ENCODE measurements at regions of chr20 and their contacts with region 1.

Region 1: DNA sequence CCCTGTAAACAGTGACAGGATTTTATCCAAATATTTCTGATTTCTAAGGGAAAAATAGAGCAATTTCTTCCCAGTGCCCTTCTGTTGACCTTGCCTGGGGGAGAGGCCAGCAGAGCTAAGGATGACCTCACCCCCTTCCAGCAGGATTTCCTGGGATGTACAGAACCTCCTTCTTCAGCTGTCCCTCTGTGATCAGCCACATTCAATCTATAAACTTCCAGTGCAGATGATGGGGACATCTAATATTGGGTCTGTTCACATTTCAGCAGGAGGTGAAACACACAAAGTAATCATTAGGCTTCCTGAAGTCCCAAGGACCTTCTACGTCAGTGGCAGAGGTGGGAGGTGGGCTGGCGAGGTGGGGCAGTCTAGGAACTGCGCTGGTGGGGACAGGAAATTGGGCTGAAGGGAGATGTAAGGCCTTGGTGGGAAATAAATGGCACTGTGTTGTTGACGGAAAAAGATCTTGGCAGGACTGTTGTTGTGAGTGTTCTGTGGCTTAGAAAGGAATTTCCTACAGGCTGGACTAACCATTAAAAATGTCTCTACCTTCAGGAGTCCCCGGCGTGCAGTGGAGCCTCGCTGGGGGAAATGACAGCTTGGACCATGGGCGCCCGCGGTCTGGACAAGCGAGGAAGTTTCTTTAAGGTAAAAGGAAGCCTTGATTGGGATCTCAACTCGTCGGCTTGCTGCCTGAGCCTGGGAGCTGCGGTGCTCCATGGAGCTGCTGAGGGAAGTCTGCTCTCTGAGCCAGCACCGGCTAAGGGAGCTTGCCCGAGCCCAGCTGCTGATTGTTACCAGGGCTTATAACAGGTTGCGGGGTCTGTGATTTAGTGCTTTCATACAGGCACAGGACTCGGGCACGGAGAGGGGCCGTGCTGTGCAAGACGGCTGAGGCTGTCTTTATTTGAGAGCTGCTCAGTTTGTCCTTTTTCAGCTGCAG is 127.9 kb upstream of the NAA20 start:
- DNase-seq: peak; percentile 34
- H3K4me3 ChIP-seq: peak overlapping the region in 1 of 2 donors; percentile 14
- H3K27ac ChIP-seq: peak overlapping the region; percentile 79 to 82
- H3K4me1 ChIP-seq: peaks cover 27% of the 10 kb centered on the region
- H3K27me3 ChIP-seq: no peaks in the 10 kb centered on the region
- CTCF ChIP-seq: no peak
- POLR2A ChIP-seq: no peak

Region 2: GRCh38 chr20:19692685-19693119 is 196.6 kb before region 1 on chr20:
- intact Hi-C with region 1: loop called (anchors 10 kb)
- DNase-seq: peak; percentile 39
- H3K4me3 ChIP-seq: no peak overlapping the region
- H3K27ac ChIP-seq: no peak overlapping the region
- H3K4me1 ChIP-seq: no peaks in the 10 kb centered on the region
- H3K27me3 ChIP-seq: no peaks in the 10 kb centered on the region
- CTCF ChIP-seq: peak; percentile 87 to 96 (median 90)
- POLR2A ChIP-seq: no peak

Region 3: DNA sequence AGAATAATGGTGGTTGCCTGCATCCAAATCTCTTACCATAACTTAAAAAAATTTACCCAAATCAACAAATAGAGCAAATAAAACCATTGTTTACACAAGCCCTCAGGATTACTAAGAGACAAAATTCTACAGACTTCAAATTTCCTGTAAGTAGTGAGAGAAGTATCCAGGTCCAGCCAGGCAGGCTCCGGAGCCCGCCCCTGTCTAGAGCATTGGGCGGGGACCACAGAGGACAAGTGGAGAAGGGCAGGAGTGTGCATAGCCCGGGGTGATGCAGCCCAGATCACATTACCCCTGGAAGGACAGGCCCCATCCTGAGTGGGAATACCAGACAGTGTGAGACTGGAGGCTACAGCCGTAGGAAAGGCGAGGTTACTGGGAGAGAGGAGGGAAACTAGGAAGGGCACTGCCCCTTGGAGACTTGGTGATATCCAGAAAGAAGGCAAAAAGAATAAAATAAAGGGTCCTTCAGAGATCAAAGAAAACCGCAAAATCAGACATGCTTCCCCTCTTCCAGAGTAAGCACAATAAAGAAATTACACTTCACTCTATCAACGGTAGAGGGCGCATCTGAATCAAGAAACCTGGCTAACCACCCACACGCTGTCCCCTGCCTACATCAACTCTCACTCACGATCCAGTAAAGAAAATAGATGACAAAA is 104.6 kb before region 1 on chr20:
- intact Hi-C with region 1: loop called (anchors 2 kb)
- DNase-seq: peak; percentile 79
- H3K4me3 ChIP-seq: no peak overlapping the region
- H3K27ac ChIP-seq: peak overlapping the region; percentile 43 to 50
- H3K4me1 ChIP-seq: no peaks in the 10 kb centered on the region
- H3K27me3 ChIP-seq: no peaks in the 10 kb centered on the region
- CTCF ChIP-seq: peak; percentile 49 to 81 (median 78)
- POLR2A ChIP-seq: no peak

Region 4: GRCh38 chr20:19850198-19850533 is 39.1 kb before region 1 on chr20:
- intact Hi-C with region 1: loop called (anchors 1 kb)
- DNase-seq: no peak
- H3K4me3 ChIP-seq: no peak overlapping the region
- H3K27ac ChIP-seq: peak overlapping the region; percentile 66 to 73
- H3K4me1 ChIP-seq: peaks cover 5% of the 10 kb centered on the region
- H3K27me3 ChIP-seq: no peaks in the 10 kb centered on the region
- CTCF ChIP-seq: no peak
- POLR2A ChIP-seq: no peak

Region 5: DNA sequence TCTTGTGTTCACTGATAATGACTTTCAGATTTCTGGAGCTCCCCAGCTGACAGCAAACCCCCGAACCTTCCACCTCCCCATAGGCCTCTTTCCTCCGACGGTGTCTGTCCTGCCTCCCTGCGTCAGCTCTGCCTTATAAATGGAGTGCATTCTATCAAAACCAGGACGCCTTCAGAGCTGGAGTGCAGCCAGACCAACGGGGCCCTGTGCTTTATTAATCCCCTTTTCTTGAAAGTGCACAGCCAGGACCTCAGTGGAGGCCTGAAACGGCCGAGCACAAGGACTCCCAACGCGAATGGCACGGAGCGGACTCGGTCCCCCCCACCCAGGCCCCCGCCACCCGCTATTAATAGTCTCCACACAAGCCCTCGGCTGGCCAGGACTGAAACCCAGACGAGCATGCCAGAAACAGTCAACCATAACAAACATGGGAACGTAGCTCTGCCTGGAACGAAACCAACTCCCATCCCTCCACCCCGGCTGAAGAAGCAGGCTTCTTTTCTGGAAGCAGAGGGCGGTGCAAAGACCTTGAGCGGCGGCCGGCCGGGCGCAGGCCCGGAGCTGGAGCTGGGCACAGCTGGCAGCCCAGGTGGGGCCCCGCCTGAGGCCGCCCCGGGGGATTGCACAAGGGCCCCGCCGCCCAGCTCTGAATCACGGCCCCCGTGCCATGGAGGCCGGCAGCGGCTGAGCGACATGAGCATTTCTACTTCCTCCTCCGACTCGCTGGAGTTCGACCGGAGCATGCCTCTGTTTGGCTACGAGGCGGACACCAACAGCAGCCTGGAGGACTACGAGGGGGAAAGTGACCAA is 85.5 kb after region 1 on chr20:
- intact Hi-C with region 1: loop called (anchors 5 kb)
- DNase-seq: peak; percentile 87
- H3K4me3 ChIP-seq: peak overlapping the region; percentile 37 to 56
- H3K27ac ChIP-seq: peak overlapping the region; percentile 85 to 89
- H3K4me1 ChIP-seq: no peaks in the 10 kb centered on the region
- H3K27me3 ChIP-seq: no peaks in the 10 kb centered on the region
- CTCF ChIP-seq: no peak
- POLR2A ChIP-seq: peak; percentile 76

Region 6: DNA sequence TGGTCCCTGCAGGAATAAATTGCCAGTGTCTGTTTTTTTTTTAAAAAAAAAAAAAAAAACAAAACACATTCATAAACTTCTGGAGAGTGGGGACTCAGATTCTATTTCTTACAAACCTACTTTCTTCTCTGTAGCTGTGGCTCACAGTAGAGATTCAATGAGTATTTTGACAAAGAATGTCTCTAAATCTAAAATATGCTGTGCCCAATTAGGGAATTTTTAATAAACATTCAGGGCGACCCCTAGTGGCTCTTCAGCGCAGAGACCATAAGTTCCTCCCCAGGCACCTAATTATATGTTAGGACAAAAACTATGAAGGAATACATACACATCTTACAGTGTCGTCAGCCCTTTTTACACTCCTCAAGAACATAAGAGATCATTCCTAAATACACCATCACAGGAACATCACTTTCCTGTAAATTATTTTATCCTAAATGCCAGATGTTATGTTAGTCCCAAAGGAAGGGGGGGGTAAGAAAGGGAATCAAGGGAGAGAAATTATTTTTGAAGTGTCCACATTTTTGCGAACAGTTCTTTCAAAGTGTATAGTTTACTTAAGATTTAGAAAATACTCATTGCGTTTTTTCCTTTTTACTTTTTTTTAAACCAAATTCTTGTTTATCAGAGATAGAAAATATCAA is 106.1 kb after region 1 on chr20:
- intact Hi-C with region 1: loop called (anchors 5 kb)
- DNase-seq: peak; percentile 24
- H3K4me3 ChIP-seq: no peak overlapping the region
- H3K27ac ChIP-seq: no peak overlapping the region
- H3K4me1 ChIP-seq: peaks cover 16% of the 10 kb centered on the region
- H3K27me3 ChIP-seq: no peaks in the 10 kb centered on the region
- CTCF ChIP-seq: peak; percentile 68 to 78 (median 74)
- POLR2A ChIP-seq: no peak